ENCODE measurements at regions of chr3 and their contacts with region 1.

Region 1: DNA sequence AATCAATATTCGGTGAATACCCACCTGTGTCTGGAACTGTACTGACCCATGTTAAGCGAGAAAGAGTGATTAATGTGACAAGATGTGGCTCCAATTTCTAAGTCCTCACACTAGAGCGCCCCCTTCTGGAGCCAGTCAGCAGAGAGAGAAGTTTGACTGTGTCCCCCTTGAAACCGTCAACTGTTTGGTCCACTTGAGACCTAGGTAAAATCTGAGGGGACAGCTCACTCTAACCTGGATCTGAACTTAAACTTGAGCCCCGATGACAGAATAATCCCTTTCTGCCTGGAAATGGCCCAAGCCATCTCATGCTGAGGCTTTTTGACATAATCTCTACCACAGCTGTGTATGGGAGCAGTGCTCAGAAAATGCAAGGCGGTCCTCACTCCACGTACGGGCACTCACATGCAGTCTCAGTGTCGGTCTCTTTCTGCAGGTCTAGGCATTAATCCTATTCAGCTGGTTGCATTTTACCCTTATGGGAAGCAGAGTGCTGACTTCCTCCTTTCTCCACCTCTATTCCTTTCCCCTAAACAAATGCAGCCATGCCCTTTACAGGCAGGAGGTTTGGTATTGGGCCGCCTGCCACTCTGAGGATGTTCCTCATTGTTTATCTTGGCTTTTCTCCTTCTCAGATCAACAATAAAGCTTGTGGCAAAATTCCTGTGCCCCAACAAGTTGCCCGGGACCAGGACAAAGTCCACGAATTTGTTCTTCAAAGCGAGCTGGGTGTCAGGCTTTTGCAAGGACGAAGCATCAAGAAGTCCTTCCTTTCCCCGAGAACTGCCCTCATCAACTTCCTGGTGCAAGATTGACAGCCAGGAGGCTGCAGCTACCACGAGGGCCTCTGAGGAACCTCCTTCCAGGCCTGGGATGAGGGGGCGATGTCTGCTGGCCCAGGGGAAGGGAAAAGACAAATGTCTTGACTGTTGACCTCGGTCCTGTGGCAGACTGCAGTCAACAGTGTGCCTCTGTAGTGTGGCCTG is 47.5 kb upstream of the LIMD1 start:
- DNase-seq: peak; percentile 13 to 90
- H3K4me3 ChIP-seq: no peak overlapping the region
- H3K27ac ChIP-seq: no peak overlapping the region
- H3K4me1 ChIP-seq: no peaks in the 10 kb centered on the region; a peak in 1 of 7 replicates
- H3K27me3 ChIP-seq: no peaks in the 10 kb centered on the region
- CTCF ChIP-seq: peak; percentile 57 to 89 (median 76)
- EP300 ChIP-seq: no peak
- POLR2A ChIP-seq: no peak
- RAD21 ChIP-seq: peak; percentile 57 to 69

Region 2: DNA sequence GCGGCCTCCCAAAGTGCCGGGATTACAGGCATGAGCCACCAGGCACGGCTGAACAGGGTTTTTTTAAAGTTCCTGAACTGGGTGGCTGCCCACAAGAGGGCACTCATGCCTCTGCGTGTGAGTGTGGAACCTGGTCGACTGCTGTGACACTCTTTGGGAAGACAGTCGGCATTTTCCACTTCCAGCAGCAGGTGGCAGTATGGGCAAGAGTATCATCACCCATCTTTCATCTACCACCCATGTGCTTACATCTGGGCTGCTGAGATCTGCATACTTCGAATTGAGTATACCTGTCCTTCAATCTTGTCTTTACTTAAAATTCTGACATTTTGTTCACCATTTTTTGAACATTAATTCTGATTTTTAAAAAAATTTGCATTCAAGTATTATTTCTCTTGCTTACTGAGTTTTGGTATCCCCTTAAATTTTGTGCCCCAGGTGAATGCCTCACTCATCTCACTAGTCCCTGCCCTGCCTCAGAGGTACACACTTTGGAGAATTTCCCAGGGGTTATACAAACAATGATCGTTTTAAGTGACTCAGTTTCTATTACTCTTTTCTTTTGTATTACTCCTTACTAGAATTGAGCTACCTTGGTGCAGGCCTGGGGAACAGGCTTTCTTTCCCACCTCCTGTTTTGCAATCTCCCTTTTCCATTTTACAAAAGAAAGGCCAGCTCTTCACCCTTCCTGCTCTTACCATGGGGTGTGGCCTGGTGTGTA is 509.1 kb before region 1 on chr3:
- CTCF ChIA-PET with region 1: interaction called, 22 read pairs
- POLR2A ChIA-PET with region 1: no interaction called
- DNase-seq: peak; percentile 88 to 92
- H3K4me3 ChIP-seq: peak overlapping the region in 1 of 4 experiments; percentile 13; a peak in 1 of 8 replicates
- H3K27ac ChIP-seq: no peak overlapping the region
- H3K4me1 ChIP-seq: peaks cover 2 to 6% (median 4%) of the 10 kb centered on the region in 4 experiments
- H3K27me3 ChIP-seq: peaks cover 16 to 37% (median 33%) of the 10 kb centered on the region in 4 experiments
- CTCF ChIP-seq: peak; percentile 89 to 99 (median 99)
- EP300 ChIP-seq: no peak
- POLR2A ChIP-seq: no peak
- RAD21 ChIP-seq: peak; percentile 95 to 96

Region 3: GRCh38 chr3:45516829-45517228 is 30.2 kb before region 1 on chr3:
- CTCF ChIA-PET with region 1: interaction called, 75 read pairs
- POLR2A ChIA-PET with region 1: interaction called, 3 read pairs
- DNase-seq: no peak
- H3K4me3 ChIP-seq: no peak overlapping the region
- H3K27ac ChIP-seq: no peak overlapping the region
- H3K4me1 ChIP-seq: no peaks in the 10 kb centered on the region
- H3K27me3 ChIP-seq: no peaks in the 10 kb centered on the region
- CTCF ChIP-seq: no peak
- EP300 ChIP-seq: no peak
- POLR2A ChIP-seq: no peak
- RAD21 ChIP-seq: no peak

Region 4: GRCh38 chr3:45560281-45560971 is 13.4 kb after region 1 on chr3:
- CTCF ChIA-PET with region 1: interaction called, 61 read pairs
- POLR2A ChIA-PET with region 1: no interaction called
- DNase-seq: no peak
- H3K4me3 ChIP-seq: no peak overlapping the region
- H3K27ac ChIP-seq: no peak overlapping the region
- H3K4me1 ChIP-seq: no peaks in the 10 kb centered on the region
- H3K27me3 ChIP-seq: no peaks in the 10 kb centered on the region
- CTCF ChIP-seq: no peak
- EP300 ChIP-seq: no peak
- POLR2A ChIP-seq: no peak
- RAD21 ChIP-seq: no peak

Region 5: DNA sequence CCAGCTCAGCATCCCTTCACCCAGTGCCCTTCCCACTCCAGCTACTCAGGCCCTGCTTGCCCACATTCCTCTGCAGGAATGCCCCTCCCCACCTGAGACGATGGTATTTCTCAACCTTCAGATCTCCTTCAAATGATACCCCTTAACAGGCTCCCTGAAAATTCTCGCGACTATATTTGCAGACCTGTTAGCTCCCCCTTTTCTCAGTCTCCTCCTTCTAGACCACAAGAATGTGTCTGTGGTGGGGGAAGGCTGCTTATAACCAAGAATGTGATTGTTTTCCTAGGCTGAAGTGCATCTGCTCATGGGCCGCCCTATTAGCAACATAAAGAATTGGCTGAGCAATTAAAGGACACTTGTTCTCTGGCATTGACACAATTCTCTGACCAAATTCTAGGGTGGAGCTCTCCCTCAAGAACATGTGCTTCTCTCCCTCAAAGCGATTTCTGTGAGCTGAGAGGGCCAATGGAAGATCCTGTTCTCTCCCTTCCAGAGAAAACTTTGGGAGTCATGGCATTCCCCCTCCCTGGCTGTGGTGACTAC is 28.4 kb after region 1 on chr3:
- CTCF ChIA-PET with region 1: interaction called, 17 read pairs
- POLR2A ChIA-PET with region 1: interaction called, 3 read pairs
- DNase-seq: no peak
- H3K4me3 ChIP-seq: no peak overlapping the region
- H3K27ac ChIP-seq: no peak overlapping the region
- H3K4me1 ChIP-seq: peaks cover 5 to 35% (median 19%) of the 10 kb centered on the region in 4 experiments; a peak in 6 of 7 replicates
- H3K27me3 ChIP-seq: no peaks in the 10 kb centered on the region
- CTCF ChIP-seq: no peak
- EP300 ChIP-seq: no peak; a peak in 1 of 3 replicates
- POLR2A ChIP-seq: no peak
- RAD21 ChIP-seq: no peak

Region 6: GRCh38 chr3:45599424-45599886 is 52.4 kb after region 1 on chr3:
- CTCF ChIA-PET with region 1: interaction called, 12 read pairs
- POLR2A ChIA-PET with region 1: no interaction called
- DNase-seq: no peak
- H3K4me3 ChIP-seq: no peak overlapping the region
- H3K27ac ChIP-seq: no peak overlapping the region
- H3K4me1 ChIP-seq: peaks cover 0 to 16% (median 7%) of the 10 kb centered on the region in 4 experiments; a peak in 5 of 7 replicates
- H3K27me3 ChIP-seq: no peaks in the 10 kb centered on the region; a peak in 2 of 7 replicates
- CTCF ChIP-seq: no peak
- EP300 ChIP-seq: no peak
- POLR2A ChIP-seq: no peak
- RAD21 ChIP-seq: no peak